ENCODE measurements at regions of chr5 and their contacts with region 1.

Region 1: GRCh38 chr5:115544436-115545350 is at the start of gene FEM1C:
- DNase-seq: peak; percentile 83
- ATAC-seq: peak; percentile 94
- H3K4me3 ChIP-seq: peak within 1 kb of the TSS; percentile 81
- H3K27ac ChIP-seq: peak within 1 kb of the TSS; percentile 88
- H3K4me1 ChIP-seq: peaks cover 4% of the 10 kb centered on the region
- H3K27me3 ChIP-seq: no peaks in the 10 kb centered on the region
- CTCF ChIP-seq: no peak
- EP300 ChIP-seq: no peak
- POLR2A ChIP-seq: peak; percentile 100
- RAD21 ChIP-seq: no peak
- polyA plus RNA-seq, gene FEM1C: 1.9 to 7.1 TPM

Region 2: DNA sequence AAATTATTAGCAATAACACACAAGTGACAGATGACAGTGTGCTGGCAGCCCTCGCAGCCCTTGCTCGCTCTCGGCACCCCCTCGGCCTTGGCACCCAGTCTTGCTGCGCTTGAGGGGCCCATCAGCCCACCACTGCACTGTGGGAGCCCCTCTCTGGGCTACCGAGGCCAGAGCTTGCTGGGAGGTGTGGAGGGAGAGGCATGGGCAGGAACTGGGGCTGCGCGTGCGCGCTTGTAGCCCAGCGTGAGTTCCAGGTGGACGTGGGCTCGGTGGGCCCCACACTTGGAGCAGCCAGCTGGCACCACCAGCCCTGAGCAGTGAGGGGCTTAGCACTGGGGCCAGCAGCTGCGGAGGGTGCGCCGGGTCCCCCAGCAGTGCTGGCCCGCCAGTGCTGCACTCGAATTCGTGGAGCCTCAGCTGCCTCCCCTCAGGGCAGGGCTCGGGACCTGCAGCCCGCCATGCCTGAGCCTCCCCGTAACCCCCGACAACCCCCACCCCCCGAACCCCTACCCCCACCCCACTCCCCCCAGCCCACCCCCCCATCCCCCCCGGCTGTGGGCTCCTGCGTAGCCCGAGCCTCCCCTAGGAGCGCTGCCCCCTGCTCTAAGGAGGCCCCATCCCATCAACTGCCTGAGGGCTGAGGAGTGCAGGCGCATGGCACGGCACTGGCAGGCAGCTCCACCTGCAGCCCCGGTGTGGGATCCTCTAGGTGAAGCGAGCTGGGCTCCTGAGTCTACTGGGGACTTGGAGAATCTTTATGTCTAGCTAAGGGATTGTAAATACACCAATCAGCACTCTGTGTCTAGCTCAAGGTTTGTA is 615.8 kb before region 1 on chr5:
- CTCF ChIA-PET with region 1: no interaction called
- POLR2A ChIA-PET with region 1: no interaction called
- RAD21 ChIA-PET with region 1: no interaction called
- SMC1A ChIA-PET with region 1: no interaction called
- in situ Hi-C with region 1: no loop called
- intact Hi-C with region 1: no loop called
- DNase-seq: no peak
- ATAC-seq: no peak
- H3K4me3 ChIP-seq: no peak overlapping the region
- H3K27ac ChIP-seq: no peak overlapping the region
- H3K4me1 ChIP-seq: no peaks in the 10 kb centered on the region
- H3K27me3 ChIP-seq: no peaks in the 10 kb centered on the region
- CTCF ChIP-seq: no peak
- EP300 ChIP-seq: no peak
- POLR2A ChIP-seq: no peak
- RAD21 ChIP-seq: no peak

Region 3: GRCh38 chr5:115372146-115372545 is 172.5 kb before region 1 on chr5:
- CTCF ChIA-PET with region 1: interaction called, 11 read pairs
- POLR2A ChIA-PET with region 1: interaction called, 11 read pairs
- RAD21 ChIA-PET with region 1: interaction called, 43 read pairs
- SMC1A ChIA-PET with region 1: interaction called, 94 read pairs
- in situ Hi-C with region 1: no loop called
- intact Hi-C with region 1: loop called (anchors 5 kb)
- DNase-seq: no peak
- ATAC-seq: no peak
- H3K4me3 ChIP-seq: no peak overlapping the region
- H3K27ac ChIP-seq: no peak overlapping the region
- H3K4me1 ChIP-seq: no peaks in the 10 kb centered on the region
- H3K27me3 ChIP-seq: no peaks in the 10 kb centered on the region; a peak in 1 of 4 replicates
- CTCF ChIP-seq: no peak
- EP300 ChIP-seq: no peak
- POLR2A ChIP-seq: no peak
- RAD21 ChIP-seq: no peak

Region 4: GRCh38 chr5:115522832-115523403 is 21.8 kb before region 1 on chr5:
- CTCF ChIA-PET with region 1: interaction called, 5 read pairs
- POLR2A ChIA-PET with region 1: interaction called, 9 read pairs
- RAD21 ChIA-PET with region 1: interaction called, 14 read pairs
- SMC1A ChIA-PET with region 1: interaction called, 166 read pairs
- in situ Hi-C with region 1: no loop called
- intact Hi-C with region 1: no loop called
- DNase-seq: no peak
- ATAC-seq: peak; percentile 13; the same call in 2 of the 3 replicates
- H3K4me3 ChIP-seq: no peak overlapping the region
- H3K27ac ChIP-seq: no peak overlapping the region
- H3K4me1 ChIP-seq: no peaks in the 10 kb centered on the region
- H3K27me3 ChIP-seq: no peaks in the 10 kb centered on the region
- CTCF ChIP-seq: no peak
- EP300 ChIP-seq: no peak
- POLR2A ChIP-seq: no peak
- RAD21 ChIP-seq: no peak

Region 5: DNA sequence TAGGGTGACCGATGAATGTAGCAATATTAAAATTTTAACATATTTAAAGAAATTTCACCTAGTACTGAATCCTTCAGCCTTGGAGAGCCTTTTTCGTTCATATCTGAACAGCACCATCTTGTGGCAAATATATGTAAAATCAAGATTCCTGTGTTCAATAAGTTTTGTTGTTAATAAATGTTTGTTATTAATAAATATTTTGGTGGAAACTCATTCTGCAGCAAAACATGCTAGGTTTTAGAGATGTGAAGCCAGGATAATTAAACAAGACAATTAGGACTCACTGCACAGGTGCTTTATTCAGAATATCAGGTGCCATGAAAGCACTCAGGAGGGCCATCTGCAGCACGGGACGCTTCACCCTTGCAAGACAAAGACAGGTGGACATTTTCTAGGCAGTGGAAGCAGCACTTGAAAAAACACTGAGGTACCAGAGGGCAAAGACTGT is 41.9 kb after region 1 on chr5:
- CTCF ChIA-PET with region 1: interaction called, 9 read pairs
- POLR2A ChIA-PET with region 1: interaction called, 7 read pairs
- RAD21 ChIA-PET with region 1: interaction called, 9 read pairs
- SMC1A ChIA-PET with region 1: interaction called, 9 read pairs
- in situ Hi-C with region 1: no loop called
- intact Hi-C with region 1: loop called (anchors 1 kb)
- DNase-seq: no peak
- ATAC-seq: peak; percentile 71
- H3K4me3 ChIP-seq: no peak overlapping the region
- H3K27ac ChIP-seq: no peak overlapping the region
- H3K4me1 ChIP-seq: peaks cover 12% of the 10 kb centered on the region; the same call in 1 of the 2 replicates
- H3K27me3 ChIP-seq: no peaks in the 10 kb centered on the region
- CTCF ChIP-seq: peak; percentile 9 to 60 (median 51); a peak in 5 of 6 replicates
- EP300 ChIP-seq: no peak
- POLR2A ChIP-seq: no peak
- RAD21 ChIP-seq: peak; percentile 81

Region 6: GRCh38 chr5:115831163-115831768 is 286.6 kb after region 1 on chr5:
- CTCF ChIA-PET with region 1: no interaction called
- POLR2A ChIA-PET with region 1: no interaction called
- RAD21 ChIA-PET with region 1: no interaction called
- SMC1A ChIA-PET with region 1: interaction called, 3 read pairs
- in situ Hi-C with region 1: no loop called
- intact Hi-C with region 1: loop called (anchors 1 kb)
- DNase-seq: no peak
- ATAC-seq: peak; percentile 84
- H3K4me3 ChIP-seq: no peak overlapping the region
- H3K27ac ChIP-seq: no peak overlapping the region
- H3K4me1 ChIP-seq: no peaks in the 10 kb centered on the region
- H3K27me3 ChIP-seq: no peaks in the 10 kb centered on the region
- CTCF ChIP-seq: peak; percentile 65 to 80 (median 72)
- EP300 ChIP-seq: no peak
- POLR2A ChIP-seq: no peak
- RAD21 ChIP-seq: peak; percentile 67

Measured in GM12878 (cell line).